Right ventricle myocardium superior (tissue), 1 donor: ENCODE measurements at regions of chr10 and their contacts with region 1.

Region 1: DNA sequence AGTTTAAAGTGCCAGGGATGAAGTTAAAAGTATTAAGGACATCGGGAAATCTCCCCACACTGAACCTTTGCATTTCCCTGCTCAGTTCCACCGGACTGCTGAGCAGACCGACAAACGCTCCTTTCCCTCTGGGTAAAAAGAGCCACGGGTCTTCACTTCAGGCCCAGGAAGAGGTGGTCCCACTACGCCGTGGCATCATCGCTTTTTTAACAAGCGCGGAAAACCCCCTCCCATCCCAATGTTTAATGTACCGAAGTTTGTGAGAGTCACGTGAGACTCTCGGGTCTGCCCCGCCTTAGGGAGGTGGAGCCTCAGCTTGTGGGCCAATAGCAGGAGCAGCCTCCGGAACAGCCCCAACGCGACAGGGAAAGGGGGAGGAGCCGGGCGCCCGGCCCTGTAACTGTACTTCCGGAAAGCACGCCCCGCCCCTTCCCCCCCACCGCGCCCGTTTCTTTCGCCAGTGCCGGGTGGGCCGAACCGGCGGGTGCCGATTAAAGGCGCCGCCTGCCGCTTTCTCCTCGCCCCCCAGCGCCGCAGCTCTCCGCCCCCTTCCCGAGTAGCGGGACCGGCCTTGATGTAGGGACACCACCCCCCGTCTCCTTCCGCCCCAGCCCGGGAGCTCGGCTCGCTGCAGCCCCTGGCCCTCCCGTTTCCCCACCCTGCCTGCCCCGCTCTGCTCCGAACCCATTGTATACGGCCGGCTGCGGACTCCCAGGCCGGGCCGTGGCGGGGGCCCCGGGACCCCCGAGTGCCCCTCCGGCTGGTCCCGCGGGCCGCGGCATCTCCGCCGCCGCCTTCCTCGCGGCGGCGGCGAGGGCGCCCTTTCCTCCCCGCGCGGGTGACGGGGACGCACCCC is 2.2 kb upstream of the TRIM8 start:
- DNase-seq: peak; percentile 99
- ATAC-seq: peak; percentile 70

Region 2: GRCh38 chr10:102503281-102504220 is 138.6 kb before region 1 on chr10 and contains the start of gene SUFU:
- intact Hi-C with region 1: loop called (anchors 2 kb)
- DNase-seq: peak; percentile 97
- ATAC-seq: peak; percentile 84
- total RNA-seq, gene SUFU: 7.6 TPM

Region 3: GRCh38 chr10:102872163-102872562 is 230.1 kb after region 1 on chr10:
- intact Hi-C with region 1: no loop called
- DNase-seq: no peak
- ATAC-seq: no peak

Region 4: GRCh38 chr10:102998005-102998404 is 355.9 kb after region 1 on chr10:
- intact Hi-C with region 1: no loop called
- DNase-seq: no peak
- ATAC-seq: no peak